CD4-positive, alpha-beta memory T cell (primary cell): ENCODE measurements at regions of chr19 and their contacts with region 1.

Region 1: GRCh38 chr19:57559404-57560025 is at the start of gene ZNF550:
- DNase-seq: peak; percentile 83 to 86 (median 84)
- H3K4me3 ChIP-seq: peak within 1 kb of the TSS; percentile 44 to 84
- H3K4me3 Mint-ChIP-seq: peak within 1 kb of the TSS; percentile 91 to 99 (median 98)
- H3K27ac ChIP-seq: peak within 1 kb of the TSS; percentile 63
- H3K27ac Mint-ChIP-seq: peak within 1 kb of the TSS; percentile 70 to 97 (median 95)
- H3K4me1 ChIP-seq: peaks cover 22% of the 10 kb centered on the region
- H3K4me1 Mint-ChIP-seq: peaks cover 20 to 47% (median 29%) of the 10 kb centered on the region in 4 donors
- H3K27me3 ChIP-seq: no peaks in the 10 kb centered on the region
- H3K27me3 Mint-ChIP-seq: peaks cover 0 to 1% of the 10 kb centered on the region in 2 donors
- total RNA-seq, gene ZNF550: 37.0 to 37.8 TPM

Region 2: DNA sequence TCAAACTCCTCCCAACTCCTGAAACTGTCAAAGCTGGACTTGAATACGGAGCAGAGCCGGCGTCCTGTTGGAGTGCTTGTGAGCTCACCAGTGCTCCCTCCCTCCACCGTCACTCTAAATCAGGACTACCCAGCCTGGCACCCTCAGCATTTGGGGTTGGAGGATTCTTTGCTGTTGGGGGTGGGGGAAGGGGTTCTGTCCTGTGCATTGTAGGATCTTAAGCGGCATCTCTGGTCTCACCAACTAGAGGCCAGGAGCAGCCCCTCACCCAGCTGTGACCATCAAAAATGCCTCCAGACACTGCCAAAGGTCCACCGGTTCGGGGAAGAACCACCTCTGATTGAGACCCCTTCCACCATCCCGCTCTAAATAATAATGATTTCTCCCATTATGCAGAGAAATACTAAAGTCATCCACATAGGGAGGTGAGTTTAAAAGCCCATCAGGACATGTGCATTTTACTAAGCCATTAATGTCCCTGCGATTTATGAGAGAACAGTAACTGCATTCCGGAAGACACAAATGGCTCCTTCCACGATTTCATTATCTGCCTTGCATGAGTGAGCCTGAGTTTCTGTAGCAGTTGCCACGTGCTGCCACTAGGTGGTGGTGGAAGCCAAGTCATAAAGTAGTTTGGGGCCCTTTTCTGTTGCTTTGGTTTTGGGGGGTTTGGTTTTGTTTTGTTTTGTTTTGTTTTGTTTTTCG is 455.8 kb before region 1 on chr19:
- CTCF ChIA-PET with region 1: no interaction called
- POLR2A ChIA-PET with region 1: no interaction called
- intact Hi-C with region 1: loop called (anchors 10 kb)
- DNase-seq: peak; percentile 58 to 67 (median 64)
- H3K4me3 ChIP-seq: no peak overlapping the region
- H3K4me3 Mint-ChIP-seq: peak overlapping the region in 6 of 8 donors; percentile 11 to 70 (median 52)
- H3K27ac ChIP-seq: no peak overlapping the region
- H3K27ac Mint-ChIP-seq: peak overlapping the region in 2 of 7 donors; percentile 24 to 52
- H3K4me1 ChIP-seq: no peaks in the 10 kb centered on the region
- H3K4me1 Mint-ChIP-seq: peaks cover 0 to 7% (median 3%) of the 10 kb centered on the region in 4 donors
- H3K27me3 ChIP-seq: no peaks in the 10 kb centered on the region
- H3K27me3 Mint-ChIP-seq: peaks cover 3 to 5% of the 10 kb centered on the region in 2 donors

Region 3: DNA sequence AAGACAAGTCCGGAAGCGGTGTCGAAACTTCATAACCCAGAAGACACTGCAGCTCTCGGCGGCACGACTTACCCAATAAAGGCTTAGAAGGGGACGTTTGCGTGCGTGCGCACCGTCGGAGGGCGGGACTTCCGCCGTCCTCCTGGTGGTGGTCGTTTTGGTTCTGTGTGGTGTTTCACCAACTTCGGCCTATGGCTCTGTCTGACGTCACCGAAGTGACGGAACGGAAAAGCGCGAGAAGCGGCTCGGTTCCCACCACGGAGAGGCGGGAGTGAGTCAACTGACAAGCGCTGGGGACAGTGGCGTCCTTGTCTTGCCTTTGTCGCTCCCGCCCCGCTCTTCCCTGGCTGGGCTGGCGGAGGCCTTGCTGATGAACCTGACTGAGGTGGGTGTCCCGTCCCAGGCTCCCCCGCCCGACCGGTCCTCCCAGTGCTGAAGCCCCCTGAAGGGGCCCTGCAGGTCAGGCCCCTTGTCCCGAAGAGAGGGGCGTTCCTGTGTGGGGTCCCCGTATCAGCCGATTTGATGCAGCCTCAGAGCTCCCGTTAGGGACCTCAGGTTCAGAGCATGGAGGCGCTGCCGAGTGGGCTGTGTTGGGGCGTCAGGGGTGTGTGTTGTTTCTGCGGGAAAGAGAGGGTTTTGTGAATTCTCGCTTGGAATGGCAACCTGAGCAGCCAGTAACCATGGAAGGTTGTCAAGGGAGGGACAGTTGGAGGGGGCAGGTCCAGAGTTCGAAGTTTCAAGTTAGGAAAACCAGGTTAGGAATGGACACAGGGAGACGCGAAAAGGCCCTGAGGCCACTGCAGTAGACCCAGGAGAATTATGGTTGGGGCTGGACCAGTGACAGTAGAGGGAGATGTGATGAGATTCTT is 169.6 kb before region 1 on chr19 and contains the start of gene ZNF548:
- CTCF ChIA-PET with region 1: no interaction called
- POLR2A ChIA-PET with region 1: no interaction called
- intact Hi-C with region 1: no loop called
- DNase-seq: peak; percentile 93 to 100 (median 95)
- H3K4me3 ChIP-seq: peak within 1 kb of the TSS; percentile 52 to 62
- H3K4me3 Mint-ChIP-seq: peak within 1 kb of the TSS; percentile 97 to 99 (median 98)
- H3K27ac ChIP-seq: peak within 1 kb of the TSS; percentile 95
- H3K27ac Mint-ChIP-seq: peak within 1 kb of the TSS; percentile 98 to 100 (median 99)
- H3K4me1 ChIP-seq: peaks cover 22% of the 10 kb centered on the region
- H3K4me1 Mint-ChIP-seq: peaks cover 22 to 41% (median 31%) of the 10 kb centered on the region in 4 donors
- H3K27me3 ChIP-seq: no peaks in the 10 kb centered on the region
- H3K27me3 Mint-ChIP-seq: peaks cover 0 to 3% of the 10 kb centered on the region in 2 donors
- total RNA-seq, gene ZNF548: 85.4 to 103 TPM

Region 4: GRCh38 chr19:57537953-57538547 is 21.5 kb before region 1 on chr19:
- CTCF ChIA-PET with region 1: no interaction called
- POLR2A ChIA-PET with region 1: no interaction called
- intact Hi-C with region 1: no loop called
- DNase-seq: no peak
- H3K4me3 ChIP-seq: peak overlapping the region; percentile 12 to 19
- H3K4me3 Mint-ChIP-seq: no peak overlapping the region
- H3K27ac ChIP-seq: no peak overlapping the region
- H3K27ac Mint-ChIP-seq: no peak overlapping the region
- H3K4me1 ChIP-seq: no peaks in the 10 kb centered on the region
- H3K4me1 Mint-ChIP-seq: peaks cover 0 to 10% (median 4%) of the 10 kb centered on the region in 4 donors
- H3K27me3 ChIP-seq: no peaks in the 10 kb centered on the region
- H3K27me3 Mint-ChIP-seq: no peaks in the 10 kb centered on the region